CD8-positive, alpha-beta memory T cell (primary cell): ENCODE measurements at regions of chr5 and their contacts with region 1.

Region 1: DNA sequence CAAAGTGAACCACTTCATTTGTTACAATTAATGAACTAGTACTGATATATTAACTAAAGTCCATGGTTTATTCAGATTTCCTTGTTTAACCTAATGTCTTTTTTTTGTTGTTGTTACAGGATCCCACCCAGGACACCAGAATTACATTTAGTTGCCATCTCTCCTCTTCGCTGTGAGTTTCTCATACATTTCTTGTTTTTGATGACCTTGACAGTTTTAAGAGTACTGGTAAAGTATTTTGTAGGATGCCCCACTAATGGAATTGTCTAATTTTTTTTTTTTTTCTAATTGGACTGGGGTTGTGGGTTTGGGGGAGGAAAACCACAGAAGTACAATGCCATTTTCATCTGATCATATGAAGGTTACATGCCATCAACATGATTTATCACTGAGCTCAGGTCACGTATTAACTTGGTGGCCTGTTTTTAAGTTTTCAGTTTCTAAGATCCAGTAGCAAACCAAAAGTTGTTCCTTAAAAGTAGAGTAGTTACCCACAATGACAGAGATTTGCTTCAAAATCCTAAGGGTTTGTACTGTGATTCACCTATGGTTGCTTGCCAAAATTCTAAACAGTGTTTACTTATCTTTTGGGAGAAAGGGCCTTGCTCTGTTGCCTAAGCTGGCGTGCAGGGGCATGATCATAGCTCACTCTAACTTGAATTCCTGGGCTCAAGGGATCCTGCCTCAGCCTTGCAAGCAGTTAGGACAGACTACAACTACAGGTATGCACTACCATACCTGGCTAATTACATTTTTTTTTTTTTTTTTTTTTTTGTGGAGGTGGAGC is 4.5 kb upstream of the OTULIN start:
- DNase-seq: no peak
- H3K4me3 ChIP-seq: no peak overlapping the region
- H3K4me3 Mint-ChIP-seq: no peak overlapping the region
- H3K27ac ChIP-seq: no peak overlapping the region
- H3K27ac Mint-ChIP-seq: peak overlapping the region in 1 of 8 donors; percentile 42
- H3K4me1 ChIP-seq: peaks cover 14% of the 10 kb centered on the region
- H3K4me1 Mint-ChIP-seq: peaks cover 21 to 64% (median 54%) of the 10 kb centered on the region in 3 donors
- H3K27me3 ChIP-seq: no peaks in the 10 kb centered on the region
- H3K27me3 Mint-ChIP-seq: peaks cover 0 to 2% of the 10 kb centered on the region in 2 donors

Region 2: DNA sequence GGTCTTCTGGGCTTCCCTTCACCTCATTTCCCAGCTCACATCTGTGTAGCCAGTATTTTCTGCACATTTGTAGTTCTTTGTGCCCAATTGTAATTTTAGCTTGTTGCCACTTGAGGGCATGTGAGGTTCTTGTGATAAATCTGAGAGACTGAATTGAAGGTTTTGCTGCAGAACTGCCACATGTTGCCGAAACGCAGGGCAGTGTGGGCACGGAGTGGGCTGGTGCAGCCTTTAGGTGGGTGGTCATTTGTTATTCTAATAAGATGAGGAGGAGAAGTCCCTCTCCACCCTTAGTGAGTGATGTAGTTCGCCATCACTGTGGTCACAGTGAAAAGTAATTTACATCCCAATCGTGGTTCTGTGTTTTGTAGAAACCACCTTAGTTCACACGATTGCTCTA is 25.7 kb after region 1 on chr5:
- CTCF ChIA-PET with region 1: no interaction called
- POLR2A ChIA-PET with region 1: no interaction called
- DNase-seq: peak in 2 of 5 donors; percentile 35 to 59
- H3K4me3 ChIP-seq: no peak overlapping the region
- H3K4me3 Mint-ChIP-seq: peak overlapping the region in 6 of 7 donors; percentile 43 to 71 (median 61)
- H3K27ac ChIP-seq: no peak overlapping the region
- H3K27ac Mint-ChIP-seq: peak overlapping the region; percentile 26 to 89 (median 58)
- H3K4me1 ChIP-seq: peaks cover 8% of the 10 kb centered on the region
- H3K4me1 Mint-ChIP-seq: peaks cover 13 to 33% (median 19%) of the 10 kb centered on the region in 3 donors
- H3K27me3 ChIP-seq: no peaks in the 10 kb centered on the region
- H3K27me3 Mint-ChIP-seq: no peaks in the 10 kb centered on the region

Region 3: DNA sequence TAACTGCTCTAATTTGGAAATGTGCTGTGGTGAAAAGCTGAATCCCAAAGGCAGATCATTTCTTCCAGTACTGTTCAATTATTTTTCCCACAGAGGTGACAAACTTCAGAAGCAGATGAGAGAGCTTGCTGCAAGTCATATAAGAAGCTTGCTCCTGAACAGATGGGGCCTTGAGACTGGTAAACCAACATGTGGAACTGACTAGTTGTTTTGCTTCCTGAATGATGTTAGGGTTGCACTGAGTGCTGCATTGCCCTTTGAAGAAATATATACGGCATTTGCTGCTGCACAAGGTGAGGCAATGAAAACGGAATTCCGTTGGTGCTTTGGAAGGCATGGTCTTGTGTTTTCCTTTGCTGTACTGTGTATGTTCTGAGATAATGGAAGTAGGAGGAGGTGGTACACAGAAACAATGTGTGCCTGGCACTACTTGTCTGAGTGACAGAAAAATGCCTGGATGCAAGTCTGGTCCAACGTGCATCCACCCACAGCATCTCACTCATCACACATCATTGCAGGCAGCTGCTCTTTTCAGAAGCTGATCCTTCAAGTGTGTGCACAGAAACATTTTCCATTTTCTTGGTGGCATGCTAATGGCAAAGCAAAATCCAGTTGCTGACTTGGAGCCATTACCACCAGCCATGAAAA is 134.7 kb after region 1 on chr5:
- CTCF ChIA-PET with region 1: no interaction called
- POLR2A ChIA-PET with region 1: no interaction called
- DNase-seq: no peak
- H3K4me3 ChIP-seq: no peak overlapping the region
- H3K4me3 Mint-ChIP-seq: no peak overlapping the region
- H3K27ac ChIP-seq: no peak overlapping the region
- H3K27ac Mint-ChIP-seq: peak overlapping the region in 1 of 8 donors; percentile 32
- H3K4me1 ChIP-seq: peaks cover 7% of the 10 kb centered on the region
- H3K4me1 Mint-ChIP-seq: peaks cover 36 to 59% (median 53%) of the 10 kb centered on the region in 3 donors
- H3K27me3 ChIP-seq: no peaks in the 10 kb centered on the region
- H3K27me3 Mint-ChIP-seq: no peaks in the 10 kb centered on the region

Region 4: GRCh38 chr5:14871210-14872069 is 211.4 kb after region 1 on chr5 and contains the start of gene ANKH:
- CTCF ChIA-PET with region 1: no interaction called
- POLR2A ChIA-PET with region 1: interaction called, 10 read pairs
- DNase-seq: peak; percentile 75 to 86 (median 84)
- H3K4me3 ChIP-seq: peak within 1 kb of the TSS; percentile 64
- H3K4me3 Mint-ChIP-seq: peak within 1 kb of the TSS; percentile 93 to 98 (median 96)
- H3K27ac ChIP-seq: peak within 1 kb of the TSS; percentile 65
- H3K27ac Mint-ChIP-seq: peak within 1 kb of the TSS; percentile 92 to 99 (median 96)
- H3K4me1 ChIP-seq: peaks cover 10% of the 10 kb centered on the region
- H3K4me1 Mint-ChIP-seq: peaks cover 28 to 54% (median 43%) of the 10 kb centered on the region in 3 donors
- H3K27me3 ChIP-seq: no peaks in the 10 kb centered on the region
- H3K27me3 Mint-ChIP-seq: no peaks in the 10 kb centered on the region
- total RNA-seq, gene ANKH: 80.0 to 80.5 TPM